MCF 10A (cell line): ENCODE measurements at regions of chr4 and their contacts with region 1.

Region 1: DNA sequence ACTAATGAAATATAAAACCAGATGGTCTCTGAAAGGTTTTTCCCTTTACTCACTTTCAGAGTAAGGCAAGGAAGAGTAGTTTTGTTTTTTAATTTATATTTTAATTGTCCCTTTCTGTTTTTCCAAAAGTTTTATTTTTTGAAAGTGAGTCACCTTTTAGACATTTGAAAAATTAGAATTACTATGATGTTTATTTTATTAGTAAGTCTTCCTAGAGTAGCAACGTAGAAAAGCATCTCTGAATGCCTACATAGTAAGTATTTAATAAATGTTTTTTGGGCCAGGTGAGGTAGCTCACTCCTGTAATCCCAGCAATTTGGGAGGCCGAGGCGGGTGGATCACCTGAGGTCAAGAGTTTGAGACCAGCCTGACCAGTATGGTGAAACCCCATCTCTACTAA is 51.1 kb downstream of the TET2 start:
- DNase-seq: no peak
- H3K4me3 Mint-ChIP-seq: no peak overlapping the region
- H3K27ac Mint-ChIP-seq: no peak overlapping the region
- H3K4me1 Mint-ChIP-seq: peaks cover 27% of the 10 kb centered on the region
- H3K27me3 Mint-ChIP-seq: no peaks in the 10 kb centered on the region
- CTCF ChIP-seq: no peak

Region 2: DNA sequence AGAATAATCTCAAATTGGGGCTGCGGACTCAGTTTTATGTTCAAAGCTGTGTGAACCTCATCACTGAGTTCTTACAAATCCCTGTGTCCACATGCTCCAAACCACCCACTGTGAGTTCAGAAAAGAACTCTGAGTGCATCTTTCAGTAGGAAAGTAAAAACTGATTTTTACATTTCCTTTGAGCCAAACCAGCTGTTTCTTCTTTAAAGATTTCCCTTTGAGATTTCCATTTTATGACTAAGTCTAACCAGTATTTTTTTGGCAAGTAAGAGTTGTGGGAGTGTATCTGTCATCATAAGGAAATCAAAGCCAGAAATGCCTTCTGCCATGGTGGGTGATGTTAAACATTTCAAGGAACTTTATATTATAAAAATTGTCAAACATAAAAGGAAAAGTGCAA is 48.9 kb after region 1 on chr4:
- CTCF ChIA-PET with region 1: no interaction called
- POLR2A ChIA-PET with region 1: no interaction called
- intact Hi-C with region 1: loop called (anchors 2 kb)
- DNase-seq: no peak
- H3K4me3 Mint-ChIP-seq: no peak overlapping the region
- H3K27ac Mint-ChIP-seq: no peak overlapping the region
- H3K4me1 Mint-ChIP-seq: no peaks in the 10 kb centered on the region
- H3K27me3 Mint-ChIP-seq: no peaks in the 10 kb centered on the region
- CTCF ChIP-seq: no peak